Heart left ventricle (tissue), 16 donors: ENCODE measurements at regions of chr16 and their contacts with region 1.

Region 1: GRCh38 chr16:56988948-56989945 is at the start of gene NLRC5:
- DNase-seq: peak; percentile 86 to 94 (median 90)
- ATAC-seq: peak; percentile 79 to 92 (median 86)
- H3K4me3 ChIP-seq: peak within 1 kb of the TSS; percentile 49 to 96 (median 84)
- H3K27ac ChIP-seq: peak within 1 kb of the TSS; percentile 28 to 96 (median 86)
- H3K4me1 ChIP-seq: peaks cover 0 to 87% (median 34%) of the 10 kb centered on the region in 12 donors
- H3K27me3 ChIP-seq: no peaks in the 10 kb centered on the region
- CTCF ChIP-seq: peak in 2 of 12 donors; percentile 2 to 7
- POLR2A ChIP-seq: peak in 1 of 2 donors; percentile 84
- total RNA-seq, gene NLRC5: 5.8 to 98.6 (median 9.9) TPM

Region 2: GRCh38 chr16:56931892-56932720 is 57.1 kb before region 1 on chr16 and contains the start of gene HERPUD1:
- intact Hi-C with region 1: loop called in 1 of 10 experiments (anchors 2 kb)
- DNase-seq: peak; percentile 99 to 100 (median 99)
- ATAC-seq: peak; percentile 95 to 97 (median 96)
- H3K4me3 ChIP-seq: peak within 1 kb of the TSS; percentile 64 to 100 (median 94)
- H3K27ac ChIP-seq: peak within 1 kb of the TSS; percentile 96 to 100 (median 99)
- H3K4me1 ChIP-seq: peaks cover 0 to 49% (median 39%) of the 10 kb centered on the region in 12 donors
- H3K27me3 ChIP-seq: no peaks in the 10 kb centered on the region
- CTCF ChIP-seq: peak in 6 of 12 donors; percentile 4 to 24 (median 10)
- POLR2A ChIP-seq: peak; percentile 84 to 94
- total RNA-seq, gene HERPUD1: 86.9 to 197 (median 117) TPM

Region 3: GRCh38 chr16:57017251-57017650 is 28.0 kb after region 1 on chr16:
- intact Hi-C with region 1: loop called in 1 of 10 experiments (anchors 2 kb)
- DNase-seq: no peak
- ATAC-seq: peak in 3 of 4 donors; percentile 25 to 65 (median 31)
- H3K4me3 ChIP-seq: no peak overlapping the region
- H3K27ac ChIP-seq: peak overlapping the region in 2 of 12 donors; percentile 13 to 37
- H3K4me1 ChIP-seq: peaks cover 0 to 42% (median 6%) of the 10 kb centered on the region in 12 donors
- H3K27me3 ChIP-seq: no peaks in the 10 kb centered on the region
- CTCF ChIP-seq: no peak
- POLR2A ChIP-seq: no peak

Region 4: GRCh38 chr16:57045694-57046381 is 56.6 kb after region 1 on chr16:
- intact Hi-C with region 1: loop called in 2 of 10 experiments (anchors 1 to 5 kb)
- DNase-seq: peak; percentile 63 to 84 (median 67)
- ATAC-seq: peak; percentile 50 to 86 (median 78)
- H3K4me3 ChIP-seq: peak overlapping the region in 4 of 12 donors; percentile 9 to 29 (median 24)
- H3K27ac ChIP-seq: no peak overlapping the region
- H3K4me1 ChIP-seq: peaks cover 0 to 23% (median 6%) of the 10 kb centered on the region in 12 donors
- H3K27me3 ChIP-seq: no peaks in the 10 kb centered on the region
- CTCF ChIP-seq: peak; percentile 34 to 79 (median 62)
- POLR2A ChIP-seq: no peak